Lower leg skin (tissue), 4 donors: ENCODE measurements at regions of chr17 and their contacts with region 1.

Region 1: DNA sequence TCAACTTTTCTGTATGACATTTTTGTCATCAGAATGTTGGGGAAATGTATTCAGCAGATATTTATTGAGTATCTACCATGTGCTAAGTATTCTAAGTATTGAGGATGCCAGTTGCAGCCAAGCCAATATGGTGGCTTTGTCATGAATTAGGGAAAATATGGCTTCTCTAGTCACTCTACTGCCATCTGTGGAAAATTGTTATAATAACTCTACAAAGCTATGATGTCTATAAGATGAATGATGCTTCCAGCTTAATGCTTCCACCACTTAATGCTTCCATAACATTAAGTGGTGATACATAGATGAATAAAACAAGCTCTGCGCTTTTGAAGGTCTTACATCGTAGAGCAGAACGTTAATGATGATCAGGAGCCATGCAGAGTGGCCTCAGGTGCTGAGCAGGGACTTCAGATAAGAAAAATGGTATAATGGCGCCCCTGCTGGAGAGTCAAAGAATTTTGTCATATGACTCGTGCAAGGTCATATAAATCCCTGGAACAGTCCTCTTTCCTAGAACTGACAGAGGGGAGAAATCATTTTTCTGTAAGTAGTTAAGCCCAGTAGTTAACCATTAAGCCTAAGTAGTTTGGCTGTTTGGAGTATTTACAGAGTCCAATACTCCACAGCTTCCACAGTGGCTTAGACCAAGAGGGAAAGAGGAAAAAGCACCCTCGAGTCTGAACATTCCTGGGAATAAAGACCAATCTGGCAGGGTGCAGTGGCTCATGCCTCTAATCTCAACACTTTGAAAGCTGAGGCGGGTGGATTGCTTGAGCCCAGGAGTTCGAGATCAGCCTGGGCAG is 2.7 kb upstream of the TMIGD1 start:
- DNase-seq: no peak
- H3K4me3 ChIP-seq: no peak overlapping the region
- CTCF ChIP-seq: no peak
- POLR2A ChIP-seq: no peak

Region 2: GRCh38 chr17:30124273-30124796 is 212.2 kb before region 1 on chr17:
- intact Hi-C with region 1: loop called (anchors 10 kb)
- DNase-seq: no peak
- H3K4me3 ChIP-seq: no peak overlapping the region
- CTCF ChIP-seq: no peak
- POLR2A ChIP-seq: no peak